ENCODE measurements at regions of chr12 and their contacts with region 1.

Region 1: GRCh38 chr12:92593734-92594402 is 108.9 kb upstream of the PLEKHG7 start:
- DNase-seq: peak; percentile 49
- ATAC-seq: peak; percentile 92
- H3K4me3 Mint-ChIP-seq: peak overlapping the region; percentile 75
- H3K27ac Mint-ChIP-seq: peak overlapping the region; percentile 96
- H3K4me1 Mint-ChIP-seq: peaks cover 46% of the 10 kb centered on the region
- H3K27me3 Mint-ChIP-seq: no peaks in the 10 kb centered on the region
- CTCF ChIP-seq: no peak

Region 2: GRCh38 chr12:91778938-91779400 is 814.9 kb before region 1 on chr12:
- CTCF ChIA-PET with region 1: no interaction called
- POLR2A ChIA-PET with region 1: no interaction called
- intact Hi-C with region 1: loop called (anchors 1 kb)
- DNase-seq: no peak
- ATAC-seq: peak; percentile 76
- H3K4me3 Mint-ChIP-seq: peak overlapping the region; percentile 50
- H3K27ac Mint-ChIP-seq: peak overlapping the region; percentile 88
- H3K4me1 Mint-ChIP-seq: peaks cover 24% of the 10 kb centered on the region
- H3K27me3 Mint-ChIP-seq: no peaks in the 10 kb centered on the region
- CTCF ChIP-seq: no peak

Region 3: GRCh38 chr12:91877022-91877421 is 716.8 kb before region 1 on chr12:
- CTCF ChIA-PET with region 1: no interaction called
- POLR2A ChIA-PET with region 1: no interaction called
- intact Hi-C with region 1: loop called (anchors 1 kb)
- DNase-seq: peak; percentile 25
- ATAC-seq: peak; percentile 89
- H3K4me3 Mint-ChIP-seq: peak overlapping the region; percentile 50
- H3K27ac Mint-ChIP-seq: peak overlapping the region; percentile 83
- H3K4me1 Mint-ChIP-seq: peaks cover 28% of the 10 kb centered on the region
- H3K27me3 Mint-ChIP-seq: no peaks in the 10 kb centered on the region
- CTCF ChIP-seq: no peak

Region 4: GRCh38 chr12:92608151-92609091 is 14.6 kb after region 1 on chr12:
- CTCF ChIA-PET with region 1: interaction called, 6 read pairs
- POLR2A ChIA-PET with region 1: interaction called, 3 read pairs
- intact Hi-C with region 1: loop called (anchors 1 kb)
- DNase-seq: no peak
- ATAC-seq: no peak
- H3K4me3 Mint-ChIP-seq: peak overlapping the region; percentile 44
- H3K27ac Mint-ChIP-seq: no peak overlapping the region
- H3K4me1 Mint-ChIP-seq: peaks cover 9% of the 10 kb centered on the region
- H3K27me3 Mint-ChIP-seq: no peaks in the 10 kb centered on the region
- CTCF ChIP-seq: no peak

Region 5: DNA sequence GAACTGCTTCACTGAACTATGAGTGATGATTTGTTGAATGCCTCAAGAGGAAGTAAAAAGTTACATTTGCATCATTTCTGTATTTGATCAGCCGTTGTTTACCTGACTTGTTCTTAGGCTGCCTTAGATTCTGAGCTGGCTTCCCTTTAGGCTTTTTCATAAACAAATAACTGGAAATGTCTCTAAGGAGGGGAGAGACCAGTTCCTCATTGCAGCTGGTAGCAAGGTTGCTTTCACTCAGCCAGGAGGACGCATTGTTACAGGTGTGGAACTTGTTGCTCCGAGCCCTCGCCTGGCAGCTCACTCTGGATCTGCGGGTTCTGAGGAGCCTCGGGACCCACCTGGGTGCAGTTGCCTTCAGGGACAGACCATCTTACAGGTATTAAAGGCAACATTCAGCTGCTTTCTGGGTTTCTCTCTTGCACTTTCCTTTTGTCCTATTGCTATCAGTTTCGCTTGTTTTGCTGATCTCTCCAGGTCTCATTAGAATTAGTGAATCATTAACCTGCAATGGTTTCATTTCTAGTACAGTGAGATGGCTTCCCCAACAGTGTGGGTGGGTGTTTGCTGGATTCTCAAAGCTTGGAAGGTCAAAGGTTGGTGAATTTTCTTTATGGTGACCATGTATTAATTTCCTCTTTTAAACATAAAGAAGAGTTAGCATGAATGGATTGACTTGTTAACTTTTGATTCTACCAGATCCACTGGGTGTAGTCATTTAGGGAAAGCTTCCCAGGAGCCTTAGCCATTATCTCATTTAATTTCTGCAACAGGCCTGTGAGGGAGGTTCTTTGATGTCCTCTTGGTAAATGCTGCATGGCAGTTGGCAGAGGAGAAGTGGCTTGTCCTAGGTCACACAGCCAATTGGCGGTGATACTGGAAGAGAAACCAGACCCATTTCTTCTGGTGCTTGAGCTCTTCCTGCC is 109.1 kb after region 1 on chr12 and contains the start of gene PLEKHG7:
- CTCF ChIA-PET with region 1: no interaction called
- POLR2A ChIA-PET with region 1: no interaction called
- intact Hi-C with region 1: loop called (anchors 1 kb)
- DNase-seq: peak; percentile 29
- ATAC-seq: peak; percentile 83
- H3K4me3 Mint-ChIP-seq: peak within 1 kb of the TSS; percentile 75
- H3K27ac Mint-ChIP-seq: peak within 1 kb of the TSS; percentile 74
- H3K4me1 Mint-ChIP-seq: peaks cover 38% of the 10 kb centered on the region
- H3K27me3 Mint-ChIP-seq: no peaks in the 10 kb centered on the region
- CTCF ChIP-seq: no peak
- total RNA-seq, gene PLEKHG7: 3.4 and 4.1 TPM in 2 replicates

Region 6: GRCh38 chr12:92729773-92730305 is 136.0 kb after region 1 on chr12:
- CTCF ChIA-PET with region 1: no interaction called
- POLR2A ChIA-PET with region 1: no interaction called
- intact Hi-C with region 1: no loop called
- DNase-seq: no peak
- ATAC-seq: no peak
- H3K4me3 Mint-ChIP-seq: no peak overlapping the region
- H3K27ac Mint-ChIP-seq: no peak overlapping the region
- H3K4me1 Mint-ChIP-seq: no peaks in the 10 kb centered on the region
- H3K27me3 Mint-ChIP-seq: no peaks in the 10 kb centered on the region
- CTCF ChIP-seq: no peak

Region 7: GRCh38 chr12:92943482-92944250 is 349.8 kb after region 1 on chr12:
- CTCF ChIA-PET with region 1: no interaction called
- POLR2A ChIA-PET with region 1: no interaction called
- intact Hi-C with region 1: loop called (anchors 10 kb)
- DNase-seq: no peak
- ATAC-seq: no peak
- H3K4me3 Mint-ChIP-seq: no peak overlapping the region
- H3K27ac Mint-ChIP-seq: peak overlapping the region; percentile 46
- H3K4me1 Mint-ChIP-seq: peaks cover 36% of the 10 kb centered on the region
- H3K27me3 Mint-ChIP-seq: no peaks in the 10 kb centered on the region
- CTCF ChIP-seq: no peak

Region 8: GRCh38 chr12:93441617-93442410 is 847.9 kb after region 1 on chr12 and contains the start of gene UBE2N:
- CTCF ChIA-PET with region 1: no interaction called
- POLR2A ChIA-PET with region 1: no interaction called
- intact Hi-C with region 1: loop called (anchors 10 kb)
- DNase-seq: peak; percentile 99
- ATAC-seq: peak; percentile 84
- H3K4me3 Mint-ChIP-seq: peak within 1 kb of the TSS; percentile 96
- H3K27ac Mint-ChIP-seq: peak within 1 kb of the TSS; percentile 96
- H3K4me1 Mint-ChIP-seq: peaks cover 56% of the 10 kb centered on the region
- H3K27me3 Mint-ChIP-seq: no peaks in the 10 kb centered on the region
- CTCF ChIP-seq: no peak
- total RNA-seq, gene UBE2N: 152 and 163 TPM in 2 replicates

Region 9: GRCh38 chr12:93979189-93979588 is 1385.3 kb after region 1 on chr12:
- CTCF ChIA-PET with region 1: no interaction called
- POLR2A ChIA-PET with region 1: no interaction called
- intact Hi-C with region 1: no loop called
- DNase-seq: no peak
- ATAC-seq: no peak
- H3K4me3 Mint-ChIP-seq: no peak overlapping the region
- H3K27ac Mint-ChIP-seq: no peak overlapping the region
- H3K4me1 Mint-ChIP-seq: no peaks in the 10 kb centered on the region
- H3K27me3 Mint-ChIP-seq: peaks cover 6% of the 10 kb centered on the region
- CTCF ChIP-seq: no peak